ENCODE measurements at regions of chr16 and their contacts with region 1.

Region 1: DNA sequence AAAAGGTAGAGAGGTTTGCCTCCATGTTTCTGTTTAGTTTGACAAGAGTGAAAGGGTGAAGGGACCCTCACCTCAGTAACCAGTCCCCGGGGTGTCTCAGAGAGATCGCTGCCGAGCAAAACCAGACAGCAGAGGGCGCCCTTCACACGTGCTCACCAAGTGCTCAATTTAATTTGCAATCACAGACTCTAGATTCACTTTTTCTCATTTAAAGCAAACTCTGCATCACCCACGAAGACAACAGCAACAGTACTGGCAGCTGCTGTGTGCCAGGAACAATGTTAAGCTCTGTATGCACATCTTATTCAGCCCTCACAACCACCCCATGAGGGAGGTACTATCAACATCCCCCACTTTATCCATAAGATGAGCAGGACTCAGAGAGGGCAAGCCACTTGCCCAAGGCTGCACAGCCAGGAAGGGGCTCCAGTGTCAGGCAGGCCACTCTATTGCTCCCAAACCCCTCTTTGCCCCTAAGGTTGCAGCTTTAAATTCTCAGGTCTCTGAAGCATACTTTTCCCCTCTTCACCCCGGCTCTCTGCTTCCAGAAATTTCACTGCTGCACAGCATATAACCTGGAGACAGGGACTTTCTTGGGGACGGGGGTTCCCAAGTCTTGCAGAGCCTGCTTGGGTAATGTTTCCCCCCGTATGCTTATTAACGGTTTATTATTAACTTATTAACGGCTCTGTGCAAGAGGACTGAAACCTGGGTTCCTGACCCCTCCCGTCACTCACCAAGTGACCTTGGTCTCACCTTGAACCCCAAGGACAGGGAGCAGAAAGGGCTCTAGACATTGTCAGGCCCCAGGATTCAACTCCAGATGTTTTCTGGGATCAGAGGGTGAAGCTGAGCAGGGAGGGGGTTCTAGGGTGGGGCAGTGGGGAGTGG is 70.9 kb downstream of the CNGB1 start:
- DNase-seq: peak; percentile 79
- H3K4me3 ChIP-seq: no peak overlapping the region
- H3K27ac ChIP-seq: no peak overlapping the region
- H3K4me1 ChIP-seq: no peaks in the 10 kb centered on the region
- H3K27me3 ChIP-seq: peaks cover 0 to 37% (median 11%) of the 10 kb centered on the region in 3 donors
- CTCF ChIP-seq: peak; percentile 66 to 85 (median 70)
- EP300 ChIP-seq: no peak
- POLR2A ChIP-seq: no peak

Region 2: DNA sequence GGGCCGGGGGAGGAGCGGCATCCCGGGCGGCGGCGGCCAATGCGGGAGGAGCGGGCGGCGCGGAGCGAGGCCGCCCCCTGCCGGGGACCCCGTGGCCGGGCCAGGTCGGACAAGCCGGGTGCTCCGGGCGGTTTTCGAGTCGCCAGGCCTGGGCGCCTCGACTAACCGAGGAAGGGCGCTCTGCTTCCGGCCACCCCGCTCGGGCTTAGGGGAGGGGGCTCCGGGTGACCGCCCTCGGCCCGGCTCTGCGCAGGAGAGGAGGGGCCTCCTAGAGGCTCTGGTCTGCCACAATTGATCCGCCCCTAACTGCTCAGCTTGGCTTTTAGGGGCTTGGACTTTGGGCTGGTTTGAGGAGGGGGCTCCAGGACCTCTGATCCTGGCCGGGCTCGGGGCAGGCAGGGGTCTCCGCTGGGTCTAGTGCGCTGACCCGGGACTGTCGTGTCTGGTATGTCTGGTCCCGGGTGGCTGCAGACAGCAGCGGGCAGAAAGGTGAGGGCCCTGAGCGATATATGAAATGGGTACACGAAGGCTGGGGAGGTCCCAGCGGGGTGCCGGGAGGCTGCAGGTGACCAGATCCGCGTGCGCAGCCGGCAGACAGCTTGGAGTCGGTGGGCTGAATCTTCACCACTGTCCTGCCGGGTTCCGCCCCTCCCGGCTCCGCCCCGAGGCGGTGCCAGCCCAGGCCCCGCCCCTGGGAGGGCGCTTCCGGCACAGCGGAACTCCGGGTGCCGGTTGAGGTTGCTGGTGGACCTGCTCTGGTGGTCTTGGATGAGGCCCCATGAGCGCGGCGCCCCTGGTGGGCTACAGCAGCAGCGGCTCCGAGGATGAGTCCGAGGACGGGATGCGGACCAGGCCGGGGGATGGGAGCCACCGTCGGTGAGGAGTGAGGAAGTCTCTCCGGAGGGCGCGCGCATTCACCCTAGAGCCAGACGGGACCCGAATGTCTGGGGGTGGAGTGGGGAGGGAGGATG is 101.0 kb after region 1 on chr16 and contains the start of gene USB1:
- intact Hi-C with region 1: loop called (anchors 1 kb)
- DNase-seq: peak; percentile 92
- H3K4me3 ChIP-seq: peak within 1 kb of the TSS; percentile 48 to 91 (median 82)
- H3K27ac ChIP-seq: peak within 1 kb of the TSS; percentile 93 to 98 (median 96)
- H3K4me1 ChIP-seq: peaks cover 0 to 45% (median 30%) of the 10 kb centered on the region in 4 donors
- H3K27me3 ChIP-seq: no peaks in the 10 kb centered on the region
- CTCF ChIP-seq: peak in 3 of 4 experiments; percentile 22 to 63 (median 58)
- EP300 ChIP-seq: no peak
- POLR2A ChIP-seq: peak; percentile 69 to 79
- total RNA-seq, gene USB1: 19.9 to 44.9 (median 34.9) TPM

Region 3: DNA sequence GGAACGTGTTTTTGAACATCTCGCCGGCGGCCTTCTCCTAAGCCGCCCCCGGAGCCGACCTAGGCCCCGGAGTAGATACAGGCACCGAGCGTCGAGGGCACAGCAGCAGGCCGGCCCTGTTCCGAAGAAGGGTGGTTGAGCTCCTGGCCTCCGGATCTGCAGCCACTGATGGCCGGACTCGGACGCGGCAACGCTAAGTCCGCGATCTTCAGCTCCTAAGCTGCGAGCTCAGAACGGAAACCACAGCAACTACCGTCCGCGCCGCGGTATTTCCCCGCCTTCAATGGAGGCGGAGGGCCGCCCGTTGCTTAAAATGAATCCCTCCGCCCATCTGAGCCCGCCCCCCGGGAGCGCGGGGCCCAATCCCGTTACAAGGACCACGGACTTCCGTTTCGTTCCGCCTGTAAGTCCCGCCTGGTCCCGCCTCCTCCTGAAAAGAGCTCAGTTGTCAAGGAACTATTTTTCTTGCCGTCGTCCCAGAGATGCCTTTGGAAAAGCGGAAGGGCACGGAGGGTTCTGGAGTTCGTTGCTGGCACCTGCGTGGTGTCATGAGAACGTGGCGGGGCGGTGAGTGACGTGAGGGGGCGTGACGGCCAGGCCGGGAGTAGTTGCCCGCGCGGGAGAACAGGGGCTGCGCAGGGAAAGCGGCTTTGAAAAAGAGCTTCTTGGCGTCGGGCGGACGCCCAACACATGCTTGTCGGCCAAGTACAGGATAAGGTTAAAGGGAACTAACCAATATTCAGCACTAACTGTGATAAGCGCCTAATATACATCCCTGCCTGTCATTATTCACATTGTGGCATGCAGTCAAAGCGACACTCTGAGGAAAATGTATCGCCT is 229.3 kb after region 1 on chr16 and contains the start of gene CFAP20:
- intact Hi-C with region 1: loop called (anchors 5 kb)
- DNase-seq: peak; percentile 99
- H3K4me3 ChIP-seq: peak within 1 kb of the TSS; percentile 73 to 92 (median 84)
- H3K27ac ChIP-seq: peak within 1 kb of the TSS; percentile 89 to 95 (median 92)
- H3K4me1 ChIP-seq: peaks cover 0 to 41% (median 39%) of the 10 kb centered on the region in 4 donors
- H3K27me3 ChIP-seq: no peaks in the 10 kb centered on the region
- CTCF ChIP-seq: no peak
- EP300 ChIP-seq: peak in 2 of 4 donors; percentile 52 to 73
- POLR2A ChIP-seq: peak; percentile 86 to 88
- total RNA-seq, gene CFAP20: 11.9 to 42.5 (median 26.6) TPM